ENCODE measurements at regions of chr17 and their contacts with region 1.

Region 1: GRCh38 chr17:3636154-3636907 is at the starts of genes CTNS and SHPK:
- DNase-seq: peak; percentile 97
- H3K27ac ChIP-seq: peak within 1 kb of the TSS; percentile 97
- CTCF ChIP-seq: no peak

Region 2: DNA sequence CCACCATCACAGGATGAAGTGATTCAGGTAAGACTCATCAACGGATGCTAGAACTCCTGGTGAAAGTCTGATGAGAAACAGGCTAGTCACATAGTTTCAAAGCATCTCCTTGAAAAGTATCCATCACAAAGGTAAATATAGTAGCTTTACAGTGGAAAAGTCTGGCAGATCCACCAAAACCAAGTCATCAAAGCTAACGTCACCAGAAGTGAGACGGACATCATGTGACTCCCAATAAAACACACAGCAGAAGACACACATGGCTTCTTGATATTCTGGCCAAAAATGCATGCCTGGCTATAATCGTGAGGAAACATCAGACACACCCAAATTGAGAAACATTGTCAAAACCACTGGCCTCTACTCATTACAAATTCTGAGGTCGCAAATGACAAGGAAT is 60.8 kb before region 1 on chr17:
- CTCF ChIA-PET with region 1: no interaction called
- POLR2A ChIA-PET with region 1: no interaction called
- DNase-seq: peak; percentile 64
- H3K27ac ChIP-seq: peak overlapping the region; percentile 79
- CTCF ChIP-seq: no peak

Region 3: DNA sequence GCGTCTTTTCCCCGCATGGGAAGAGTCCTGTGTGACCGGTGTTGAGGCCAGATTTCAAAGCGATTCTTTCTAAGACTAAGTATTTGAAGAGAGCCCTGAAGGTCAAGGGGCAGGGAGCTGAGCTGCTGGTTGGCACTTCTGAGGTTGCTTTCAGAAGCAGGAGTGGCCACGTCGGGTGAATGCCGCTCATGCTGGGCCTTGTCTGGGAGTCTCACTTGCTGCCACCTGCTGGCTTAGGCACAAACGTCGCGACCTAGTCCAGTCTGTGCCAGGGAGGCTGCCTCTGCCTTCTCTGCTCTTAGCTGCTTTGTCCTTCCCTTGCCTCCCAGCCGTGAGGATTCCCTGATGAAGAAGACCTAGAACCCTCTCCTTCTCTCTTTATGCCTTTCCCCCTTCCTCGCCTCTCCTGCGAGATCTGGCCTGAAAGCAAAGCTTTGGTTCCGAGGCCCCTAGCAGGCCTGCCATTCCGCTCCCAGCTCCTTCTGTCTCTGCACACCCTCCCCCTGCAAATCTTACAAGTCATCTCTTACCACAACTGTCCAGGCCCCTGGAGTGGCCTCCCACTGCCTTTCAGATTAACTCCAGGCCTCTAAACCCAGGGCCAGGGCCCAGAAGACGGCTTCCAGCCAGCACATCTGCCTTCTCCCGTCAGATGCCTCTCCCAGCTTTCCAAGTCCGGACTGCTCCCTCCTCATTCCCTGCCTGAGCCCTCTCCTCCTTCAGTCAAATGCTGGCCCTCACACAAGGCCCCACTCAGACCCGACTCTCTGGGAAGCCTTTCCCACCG is 11.6 kb after region 1 on chr17:
- CTCF ChIA-PET with region 1: interaction called, 12 read pairs
- POLR2A ChIA-PET with region 1: no interaction called
- DNase-seq: no peak
- H3K27ac ChIP-seq: peak overlapping the region; percentile 12; the same call in 1 of the 2 replicates
- CTCF ChIP-seq: peak; percentile 53

Measured in RWPE1 (cell line).